ENCODE measurements at regions of chr12 and their contacts with region 1.

Region 1: DNA sequence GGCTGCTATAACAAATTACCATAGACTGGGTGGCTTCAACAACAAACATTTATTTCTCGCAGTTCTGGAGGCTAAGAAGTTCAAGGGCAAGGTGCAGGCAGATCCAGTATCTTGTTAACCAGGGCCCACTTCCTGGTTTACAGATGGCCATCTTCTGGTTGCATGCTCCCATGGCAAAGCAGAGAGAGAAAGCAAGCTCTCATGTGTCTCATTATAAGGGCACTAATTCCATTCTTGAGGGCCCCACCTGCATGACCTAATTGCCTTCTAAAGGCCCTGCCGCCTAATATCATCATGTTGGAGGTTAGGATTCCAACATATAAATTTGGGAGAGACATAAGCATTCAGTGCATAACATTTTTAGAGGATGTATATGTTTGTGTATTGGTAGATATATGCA is 280.1 kb upstream of the TMPO start:
- DNase-seq: no peak
- H3K4me3 Mint-ChIP-seq: no peak overlapping the region
- H3K27ac Mint-ChIP-seq: no peak overlapping the region
- H3K4me1 Mint-ChIP-seq: peaks cover 9% of the 10 kb centered on the region
- H3K27me3 Mint-ChIP-seq: no peaks in the 10 kb centered on the region
- CTCF ChIP-seq: no peak

Region 2: DNA sequence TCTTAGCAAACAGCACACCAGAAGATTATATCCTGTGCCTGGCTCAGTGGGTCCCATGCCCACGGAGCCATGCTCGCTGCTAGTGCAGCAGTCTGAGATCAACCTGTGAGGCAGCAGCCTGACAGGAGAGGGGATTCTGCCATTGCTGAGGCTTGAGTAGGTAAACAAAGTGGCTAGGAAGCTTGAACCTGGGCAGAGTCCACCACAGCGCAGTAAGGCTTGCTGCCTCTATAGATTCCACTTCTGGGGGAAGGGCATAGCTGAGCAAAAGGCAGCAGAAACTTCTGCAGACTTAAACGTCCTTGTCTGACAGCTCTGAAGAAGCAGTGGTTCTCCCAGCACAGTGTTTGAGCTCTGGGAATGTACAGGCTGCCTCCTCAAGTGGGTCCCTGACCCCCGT is 562.4 kb before region 1 on chr12:
- CTCF ChIA-PET with region 1: interaction called, 14 read pairs
- intact Hi-C with region 1: no loop called
- DNase-seq: no peak
- H3K4me3 Mint-ChIP-seq: no peak overlapping the region
- H3K27ac Mint-ChIP-seq: no peak overlapping the region
- H3K4me1 Mint-ChIP-seq: no peaks in the 10 kb centered on the region
- H3K27me3 Mint-ChIP-seq: no peaks in the 10 kb centered on the region
- CTCF ChIP-seq: no peak

Measured in Calu3 (cell line).